Activated CD4-positive, alpha-beta T cell treated with anti-CD3 and anti-CD28 coated beads for 36 hours (primary cell): ENCODE measurements at regions of chr17 and their contacts with region 1.

Region 1: DNA sequence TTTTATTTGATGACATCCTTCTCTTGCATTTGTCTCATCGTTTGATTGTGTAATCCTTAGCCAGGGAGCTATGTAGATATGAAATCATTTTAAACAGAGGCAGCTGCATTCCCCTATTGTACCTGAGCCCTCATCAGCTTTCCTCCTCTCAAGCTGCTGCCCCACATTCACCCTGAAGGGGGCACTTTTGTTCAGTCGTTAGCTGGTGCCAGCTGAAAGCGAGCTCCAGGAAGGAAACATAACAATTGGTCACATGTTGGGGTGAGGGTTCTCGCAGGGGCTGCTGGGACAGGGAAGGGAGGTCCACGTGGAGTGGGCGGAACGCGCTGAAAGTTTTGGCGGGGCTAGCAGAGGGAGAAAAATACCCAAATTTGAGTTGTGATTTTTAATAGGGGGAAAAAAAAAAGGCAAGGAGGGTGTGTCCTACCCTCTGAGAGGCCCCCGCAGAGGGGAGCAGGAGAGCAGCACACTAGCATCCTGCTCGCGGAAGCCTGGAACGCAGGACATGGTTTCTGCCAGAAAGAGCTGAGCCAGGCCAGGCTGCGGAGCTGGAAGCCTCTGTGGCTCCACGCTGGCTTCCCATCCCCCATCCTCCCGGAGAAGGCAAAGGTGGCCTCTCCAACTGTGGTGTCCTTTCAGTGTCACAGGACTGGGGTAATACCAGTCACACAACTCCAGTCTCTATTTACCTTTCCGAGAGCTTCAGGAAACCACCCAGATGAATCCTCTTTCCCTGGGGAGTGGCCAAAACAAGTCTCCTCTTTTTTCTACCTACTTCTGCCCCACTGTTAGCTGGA is 8.5 kb upstream of the MSL1 start:
- DNase-seq: peak; percentile 96
- ATAC-seq: peak; percentile 82
- H3K4me3 Mint-ChIP-seq: peak overlapping the region; percentile 72
- H3K27ac Mint-ChIP-seq: peak overlapping the region; percentile 86
- H3K4me1 Mint-ChIP-seq: peaks cover 55% of the 10 kb centered on the region
- H3K27me3 Mint-ChIP-seq: no peaks in the 10 kb centered on the region

Region 2: GRCh38 chr17:40026816-40027613 is 86.3 kb before region 1 on chr17:
- CTCF ChIA-PET with region 1: interaction called, 11 read pairs
- POLR2A ChIA-PET with region 1: no interaction called
- intact Hi-C with region 1: no loop called
- DNase-seq: peak; percentile 86
- ATAC-seq: peak; percentile 94
- H3K4me3 Mint-ChIP-seq: no peak overlapping the region
- H3K27ac Mint-ChIP-seq: no peak overlapping the region
- H3K4me1 Mint-ChIP-seq: peaks cover 22% of the 10 kb centered on the region
- H3K27me3 Mint-ChIP-seq: no peaks in the 10 kb centered on the region

Region 3: DNA sequence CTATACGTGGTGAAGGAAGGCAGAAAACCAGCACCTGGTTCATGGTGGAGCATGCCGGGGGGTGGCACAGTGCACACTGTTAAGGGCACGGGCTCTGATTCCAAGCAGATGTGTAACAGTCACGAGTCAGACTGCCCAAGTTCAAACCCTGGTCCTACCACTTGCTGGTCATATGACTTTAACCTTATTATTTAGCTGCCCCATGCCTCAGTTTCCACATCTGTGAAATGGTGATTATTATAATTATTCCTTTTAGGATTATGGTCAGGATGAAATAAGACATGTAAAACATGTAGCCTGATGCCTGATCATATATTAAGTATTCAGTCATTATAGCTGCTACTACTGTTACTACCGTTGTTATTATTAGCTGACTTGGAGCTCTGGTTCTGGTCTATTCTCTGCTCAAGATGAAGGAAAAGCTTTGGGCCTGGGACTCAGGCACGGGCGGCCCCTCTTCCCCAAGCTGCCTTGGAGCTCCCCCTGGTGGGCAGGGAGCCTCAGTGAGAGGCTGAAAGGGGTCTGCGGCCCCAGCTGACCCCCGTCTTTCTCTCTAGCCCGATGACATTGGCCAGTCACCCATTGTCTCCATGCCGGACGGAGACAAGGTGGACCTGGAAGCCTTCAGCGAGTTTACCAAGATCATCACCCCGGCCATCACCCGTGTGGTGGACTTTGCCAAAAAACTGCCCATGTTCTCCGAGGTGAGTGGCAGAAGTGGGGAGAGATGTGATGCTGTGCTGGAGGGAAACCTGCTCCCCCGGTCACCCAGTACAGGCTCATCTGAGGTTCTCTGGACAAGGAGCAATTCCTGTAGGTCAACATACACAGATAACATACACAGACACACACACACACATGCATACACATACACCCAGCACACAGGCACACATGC is 26.9 kb before region 1 on chr17:
- CTCF ChIA-PET with region 1: interaction called, 18 read pairs
- POLR2A ChIA-PET with region 1: interaction called, 3 read pairs
- intact Hi-C with region 1: no loop called
- DNase-seq: peak; percentile 81
- ATAC-seq: peak; percentile 78
- H3K4me3 Mint-ChIP-seq: no peak overlapping the region
- H3K27ac Mint-ChIP-seq: no peak overlapping the region
- H3K4me1 Mint-ChIP-seq: peaks cover 5% of the 10 kb centered on the region
- H3K27me3 Mint-ChIP-seq: no peaks in the 10 kb centered on the region

Region 4: DNA sequence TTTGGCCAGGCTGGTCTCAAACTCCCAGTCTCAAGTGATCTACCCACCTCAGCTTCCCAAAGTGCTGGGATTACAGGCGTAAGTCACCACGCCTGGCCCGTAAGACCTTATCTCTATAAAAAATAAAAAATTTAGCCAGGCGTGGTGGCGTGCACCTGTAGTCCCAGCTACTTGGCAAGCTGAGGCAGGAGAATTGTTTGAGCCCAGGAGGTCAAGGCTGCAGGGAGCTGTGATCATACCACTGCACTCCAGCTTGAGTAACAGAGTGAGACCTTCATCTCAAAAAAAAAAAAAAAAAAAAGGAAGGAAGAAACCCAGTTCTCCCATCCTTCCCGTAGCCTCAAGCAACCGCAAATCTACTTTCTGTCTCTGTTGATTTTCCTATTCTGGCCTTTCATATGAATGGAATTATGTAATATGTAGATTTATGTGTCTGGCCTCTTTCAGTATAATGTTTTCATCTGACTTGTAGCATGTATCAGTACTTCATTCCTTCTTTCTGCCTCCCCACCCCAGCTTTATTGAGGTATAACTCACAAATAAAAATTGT is 38.2 kb after region 1 on chr17:
- CTCF ChIA-PET with region 1: interaction called, 17 read pairs
- POLR2A ChIA-PET with region 1: interaction called, 3 read pairs
- intact Hi-C with region 1: loop called (anchors 5 kb)
- DNase-seq: no peak
- ATAC-seq: no peak
- H3K4me3 Mint-ChIP-seq: no peak overlapping the region
- H3K27ac Mint-ChIP-seq: peak overlapping the region; percentile 68
- H3K4me1 Mint-ChIP-seq: peaks cover 64% of the 10 kb centered on the region
- H3K27me3 Mint-ChIP-seq: no peaks in the 10 kb centered on the region

Region 5: GRCh38 chr17:40177275-40177874 is 64.1 kb after region 1 on chr17 and contains the start of gene RAPGEFL1:
- CTCF ChIA-PET with region 1: interaction called, 12 read pairs
- POLR2A ChIA-PET with region 1: no interaction called
- intact Hi-C with region 1: loop called in 1 of 2 experiments (anchors 2 kb)
- DNase-seq: peak; percentile 95
- ATAC-seq: peak; percentile 97
- H3K4me3 Mint-ChIP-seq: peak within 1 kb of the TSS; percentile 53
- H3K27ac Mint-ChIP-seq: no peak within 1 kb of the TSS
- H3K4me1 Mint-ChIP-seq: peaks cover 8% of the 10 kb centered on the region
- H3K27me3 Mint-ChIP-seq: no peaks in the 10 kb centered on the region
- total RNA-seq, gene RAPGEFL1: 5.1 to 6.2 TPM